Testis (tissue), 5 donors: ENCODE measurements at regions of chr6 and their contacts with region 1.

Region 1: GRCh38 chr6:131909408-131910218 is 41.6 kb downstream of the CCN2 start:
- DNase-seq: peak; percentile 91
- H3K4me3 ChIP-seq: no peak overlapping the region
- H3K27ac ChIP-seq: no peak overlapping the region
- H3K4me1 ChIP-seq: no peaks in the 10 kb centered on the region
- H3K27me3 ChIP-seq: no peaks in the 10 kb centered on the region
- CTCF ChIP-seq: peak; percentile 78 to 91 (median 84)
- POLR2A ChIP-seq: no peak

Region 2: DNA sequence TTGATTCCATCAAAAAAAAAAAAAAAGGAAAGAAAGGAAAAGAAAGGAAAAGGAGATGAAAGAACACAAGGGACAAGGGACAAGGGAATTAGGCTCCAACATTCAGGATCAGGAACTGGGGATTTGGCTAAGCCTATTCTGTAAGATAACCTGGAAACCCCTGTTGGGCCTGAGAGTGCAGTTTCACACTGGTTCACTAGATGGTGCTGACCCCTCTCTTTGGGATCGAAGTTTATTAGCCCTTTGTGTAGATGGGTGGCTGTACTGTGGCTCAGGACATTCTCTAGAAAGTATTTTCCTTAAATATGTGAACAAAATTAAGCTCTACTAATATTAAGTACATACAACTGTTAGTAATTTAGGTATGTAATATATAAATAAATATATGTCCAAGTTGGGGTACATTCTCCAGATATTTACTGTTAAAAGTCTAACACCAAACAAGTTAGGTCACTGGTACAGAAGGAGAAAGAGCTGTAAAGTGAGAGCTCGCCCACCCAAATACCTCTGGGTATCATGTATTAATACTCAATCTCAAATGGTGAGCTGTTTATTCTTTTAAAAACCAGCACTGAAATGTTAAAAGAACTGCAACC is 214.7 kb before region 1 on chr6:
- intact Hi-C with region 1: loop called (anchors 5 kb)
- DNase-seq: peak; percentile 65
- H3K4me3 ChIP-seq: no peak overlapping the region
- H3K27ac ChIP-seq: no peak overlapping the region
- H3K4me1 ChIP-seq: no peaks in the 10 kb centered on the region
- H3K27me3 ChIP-seq: no peaks in the 10 kb centered on the region
- CTCF ChIP-seq: peak; percentile 51 to 73 (median 67)
- POLR2A ChIP-seq: no peak